ENCODE measurements at regions of chr12 and their contacts with region 1.

Region 1: DNA sequence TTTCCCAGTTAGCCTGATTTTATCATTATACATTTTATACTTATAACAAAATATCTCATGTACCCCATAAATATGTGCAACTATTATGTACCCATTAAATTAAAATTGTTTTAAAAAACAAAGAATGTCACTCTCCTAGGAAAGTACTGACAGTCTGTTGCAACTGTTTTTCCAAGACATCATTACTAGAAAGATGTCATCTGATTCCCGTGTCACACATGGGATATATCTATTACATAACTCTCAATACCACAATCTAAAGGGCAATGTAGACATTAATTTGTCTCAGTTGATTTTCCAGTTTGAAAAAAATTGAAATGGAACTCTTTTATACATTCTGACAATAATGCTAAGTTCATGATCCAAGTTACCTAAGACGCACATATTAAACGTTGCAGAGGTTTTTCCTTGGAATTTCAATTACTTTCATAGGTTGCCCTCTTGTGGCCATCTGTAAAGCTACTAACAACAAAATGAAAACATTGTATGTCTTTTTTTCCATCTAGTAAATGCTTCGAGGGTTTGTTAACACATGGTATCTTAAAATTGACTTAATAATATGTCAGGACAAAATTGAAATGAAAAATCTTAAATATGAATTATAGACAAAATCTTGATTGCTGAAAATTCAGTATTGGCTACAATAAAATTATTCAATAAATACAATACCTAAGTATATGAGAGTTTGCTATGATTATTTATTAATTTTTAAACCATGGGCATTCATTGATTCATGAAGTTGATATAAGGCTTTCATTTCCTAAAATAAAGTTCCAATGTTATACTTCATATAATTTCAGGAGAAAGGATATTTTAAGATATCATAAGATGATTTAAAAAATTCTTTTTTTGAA is 131.6 kb downstream of the PPFIA2 start:
- DNase-seq: peak; percentile 11
- H3K4me3 ChIP-seq: no peak overlapping the region
- H3K27ac ChIP-seq: no peak overlapping the region
- H3K4me1 ChIP-seq: no peaks in the 10 kb centered on the region
- H3K27me3 ChIP-seq: no peaks in the 10 kb centered on the region
- CTCF ChIP-seq: peak in 3 of 4 experiments; percentile 58 to 69 (median 60)
- POLR2A ChIP-seq: no peak

Region 2: GRCh38 chr12:81450920-81451739 is 176.4 kb before region 1 on chr12:
- intact Hi-C with region 1: loop called (anchors 5 kb)
- DNase-seq: peak; percentile 29
- H3K4me3 ChIP-seq: no peak overlapping the region
- H3K27ac ChIP-seq: no peak overlapping the region
- H3K4me1 ChIP-seq: no peaks in the 10 kb centered on the region
- H3K27me3 ChIP-seq: no peaks in the 10 kb centered on the region
- CTCF ChIP-seq: peak; percentile 19 to 55 (median 44)
- POLR2A ChIP-seq: no peak

Region 3: DNA sequence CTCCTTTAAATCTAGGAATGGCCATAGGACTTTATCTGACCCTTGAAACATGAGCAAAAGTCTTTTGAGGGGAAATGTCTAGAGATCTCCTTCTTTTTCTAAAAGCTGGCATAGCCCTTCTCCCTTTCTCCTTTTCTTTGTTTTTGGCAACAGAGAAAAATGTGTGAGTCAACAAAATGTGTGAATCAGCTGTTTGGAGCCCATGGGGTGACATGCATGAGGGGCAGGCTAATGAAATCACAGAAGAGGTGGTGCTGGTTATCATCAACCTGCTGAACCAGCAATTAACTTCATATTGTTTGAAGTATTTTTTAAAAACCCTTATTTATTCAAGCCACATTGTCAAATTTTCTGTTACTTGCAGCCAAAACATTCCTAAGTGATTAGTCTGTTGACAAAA is 598.3 kb after region 1 on chr12:
- intact Hi-C with region 1: no loop called
- DNase-seq: no peak
- H3K4me3 ChIP-seq: no peak overlapping the region
- H3K27ac ChIP-seq: no peak overlapping the region
- H3K4me1 ChIP-seq: no peaks in the 10 kb centered on the region
- H3K27me3 ChIP-seq: no peaks in the 10 kb centered on the region
- CTCF ChIP-seq: no peak
- POLR2A ChIP-seq: no peak